ENCODE measurements at regions of chr11 and their contacts with region 1.

Region 1: DNA sequence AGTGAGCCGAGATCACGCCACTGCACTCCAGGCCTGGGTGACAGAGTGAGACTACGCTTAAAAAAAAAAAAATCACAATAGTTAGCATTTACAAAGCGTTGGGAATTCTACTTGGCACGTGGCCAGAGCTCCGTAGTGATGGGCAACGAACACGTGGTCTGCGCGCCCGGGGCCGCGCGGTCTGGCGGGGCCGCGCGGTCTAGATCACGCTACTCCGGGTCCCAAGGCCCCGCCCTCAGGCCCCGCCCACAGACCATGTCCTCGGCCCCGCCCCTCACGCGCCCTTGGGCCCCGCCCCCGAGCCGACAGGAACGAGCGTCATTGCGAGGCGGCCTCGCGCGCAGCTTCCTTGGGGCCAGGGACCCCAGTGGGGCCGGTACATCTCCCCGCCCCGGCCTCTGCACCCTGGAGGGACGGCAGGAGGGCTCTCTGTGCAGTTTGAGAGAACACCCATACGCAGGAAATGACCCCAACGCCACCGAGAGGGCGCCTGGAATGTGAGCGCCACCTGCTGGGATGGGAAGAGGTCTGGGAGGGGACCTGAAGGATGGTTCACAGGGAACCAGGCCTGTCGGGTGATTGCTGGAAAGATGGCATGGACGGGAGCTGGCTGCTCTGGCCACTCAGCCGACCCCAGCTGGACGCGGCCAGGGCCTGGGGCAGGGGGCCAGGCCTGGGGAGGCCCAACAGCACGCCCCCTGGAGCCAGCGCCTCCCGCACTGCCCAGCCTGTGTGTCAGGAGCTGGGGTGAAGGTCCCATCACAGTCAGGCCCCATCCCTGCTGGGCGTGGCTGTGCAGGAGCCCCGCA is 2.0 kb upstream of the PTDSS2 start:
- H3K4me3 ChIP-seq: peak overlapping the region; percentile 52
- H3K27ac ChIP-seq: peak overlapping the region; percentile 20; the same call in 1 of the 2 replicates
- H3K4me1 ChIP-seq: no peaks in the 10 kb centered on the region
- CTCF ChIP-seq: peak; percentile 96

Region 2: GRCh38 chr11:396948-397548 is 51.1 kb before region 1 on chr11:
- CTCF ChIA-PET with region 1: interaction called, 12 read pairs
- POLR2A ChIA-PET with region 1: no interaction called
- H3K4me3 ChIP-seq: peak overlapping the region; percentile 13
- H3K27ac ChIP-seq: no peak overlapping the region
- H3K4me1 ChIP-seq: no peaks in the 10 kb centered on the region; the same call in 1 of the 2 replicates
- CTCF ChIP-seq: no peak

Region 3: DNA sequence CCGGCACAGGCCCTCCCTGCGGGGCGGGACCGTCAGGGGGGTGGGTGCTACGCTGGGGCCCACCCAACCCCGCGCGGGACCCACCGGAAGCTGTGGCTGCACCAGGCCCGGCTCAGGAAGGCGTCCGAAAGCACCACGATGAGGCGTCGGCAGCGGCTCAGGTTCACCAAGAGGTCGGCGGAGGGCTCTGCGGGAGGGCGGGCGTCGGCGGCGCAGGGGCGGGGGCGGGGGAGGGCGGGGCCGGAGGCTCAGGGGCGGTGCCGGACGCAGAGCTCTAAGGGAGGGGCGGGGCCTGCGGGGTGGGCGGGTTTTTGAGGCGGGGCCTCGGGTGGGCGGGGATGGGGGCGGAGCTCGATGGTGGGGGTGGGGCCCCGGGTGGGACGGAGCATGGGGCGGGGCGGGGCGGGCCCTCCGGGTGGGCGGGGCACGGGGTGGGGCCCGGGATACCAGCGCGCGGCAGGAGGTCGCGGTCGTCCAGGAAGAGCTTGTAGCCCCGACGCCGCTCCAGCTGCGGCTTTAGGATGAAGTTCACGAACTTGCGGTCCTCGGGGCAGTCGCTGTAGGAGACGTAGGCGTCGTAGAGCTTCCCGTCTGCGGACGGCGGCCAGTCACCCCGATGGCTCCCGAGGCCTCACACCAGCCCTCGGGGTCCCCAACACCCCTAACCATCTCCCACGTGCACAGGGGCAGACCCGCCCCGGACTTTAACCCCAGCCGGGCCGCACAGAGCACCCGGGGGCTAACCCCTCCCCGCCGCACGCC is 41.0 kb before region 1 on chr11:
- CTCF ChIA-PET with region 1: interaction called, 15 read pairs
- POLR2A ChIA-PET with region 1: interaction called, 15 read pairs
- H3K4me3 ChIP-seq: peak overlapping the region; percentile 36
- H3K27ac ChIP-seq: no peak overlapping the region; the same call in 1 of the 2 replicates
- H3K4me1 ChIP-seq: no peaks in the 10 kb centered on the region
- CTCF ChIP-seq: no peak

Region 4: DNA sequence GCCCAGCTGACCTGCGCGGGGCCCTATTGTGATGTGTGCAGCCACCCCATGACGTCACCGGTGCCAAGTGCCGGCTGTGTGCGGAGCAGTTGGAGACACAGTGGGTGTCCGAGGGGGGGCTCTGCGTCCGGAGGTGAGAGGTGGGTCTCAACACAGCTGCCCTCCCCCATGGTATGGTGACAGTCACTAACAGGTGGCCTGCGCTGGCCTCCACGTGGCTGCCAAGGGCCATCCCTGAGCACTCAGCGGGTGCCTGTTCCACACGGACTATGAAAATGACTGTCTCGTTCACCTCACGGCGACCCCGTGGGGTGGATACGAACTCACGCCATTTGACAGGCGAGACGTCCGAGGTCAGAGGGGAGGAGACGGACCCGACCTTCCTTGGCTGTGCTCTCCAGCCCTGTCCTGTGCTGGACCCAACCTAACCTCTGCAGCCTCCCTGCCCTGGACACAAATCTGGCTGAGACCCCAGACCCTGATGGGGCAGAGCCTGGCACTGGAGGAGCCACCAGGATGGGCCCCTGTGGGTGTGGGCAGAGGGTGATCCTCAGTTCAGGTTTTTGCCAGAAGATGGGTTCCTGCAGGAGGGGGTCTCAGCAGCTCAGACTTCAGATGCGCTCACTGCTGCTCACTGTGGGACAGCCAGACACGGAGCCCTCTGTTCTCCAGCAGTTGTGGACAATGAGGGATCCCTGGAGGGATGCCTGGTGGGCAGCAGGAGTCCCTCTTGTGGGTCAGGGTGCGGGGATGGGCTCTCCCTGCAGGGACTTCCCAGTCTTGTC is 80.9 kb after region 1 on chr11:
- CTCF ChIA-PET with region 1: no interaction called
- POLR2A ChIA-PET with region 1: no interaction called
- H3K4me3 ChIP-seq: no peak overlapping the region
- H3K27ac ChIP-seq: no peak overlapping the region
- H3K4me1 ChIP-seq: no peaks in the 10 kb centered on the region
- CTCF ChIP-seq: no peak

Measured in HEK293 (cell line).